Left cardiac atrium (tissue), 4 donors: ENCODE measurements at regions of chr15 and their contacts with region 1.

Region 1: GRCh38 chr15:23734862-23735261 is 47.8 kb upstream of the NDN start:
- DNase-seq: no peak
- ATAC-seq: no peak

Region 2: GRCh38 chr15:23797747-23798446 is 63.0 kb after region 1 on chr15:
- intact Hi-C with region 1: loop called in 1 of 2 experiments (anchors 10 kb)
- DNase-seq: no peak
- ATAC-seq: no peak